Activated B cell treated with CpG ODN at 0.5 μM for 24 hours (primary cell): ENCODE measurements at regions of chr22 and their contacts with region 1.

Region 1: GRCh38 chr22:26428515-26429457 is at the start of gene ASPHD2:
- DNase-seq: peak; percentile 83
- ATAC-seq: peak; percentile 82
- H3K4me3 Mint-ChIP-seq: peak within 1 kb of the TSS; percentile 92
- H3K27ac Mint-ChIP-seq: peak within 1 kb of the TSS; percentile 98
- H3K4me1 Mint-ChIP-seq: peaks cover 59% of the 10 kb centered on the region
- H3K27me3 Mint-ChIP-seq: no peaks in the 10 kb centered on the region
- CTCF ChIP-seq: no peak
- total RNA-seq, gene ASPHD2: 15.5 TPM in 2 replicates

Region 2: DNA sequence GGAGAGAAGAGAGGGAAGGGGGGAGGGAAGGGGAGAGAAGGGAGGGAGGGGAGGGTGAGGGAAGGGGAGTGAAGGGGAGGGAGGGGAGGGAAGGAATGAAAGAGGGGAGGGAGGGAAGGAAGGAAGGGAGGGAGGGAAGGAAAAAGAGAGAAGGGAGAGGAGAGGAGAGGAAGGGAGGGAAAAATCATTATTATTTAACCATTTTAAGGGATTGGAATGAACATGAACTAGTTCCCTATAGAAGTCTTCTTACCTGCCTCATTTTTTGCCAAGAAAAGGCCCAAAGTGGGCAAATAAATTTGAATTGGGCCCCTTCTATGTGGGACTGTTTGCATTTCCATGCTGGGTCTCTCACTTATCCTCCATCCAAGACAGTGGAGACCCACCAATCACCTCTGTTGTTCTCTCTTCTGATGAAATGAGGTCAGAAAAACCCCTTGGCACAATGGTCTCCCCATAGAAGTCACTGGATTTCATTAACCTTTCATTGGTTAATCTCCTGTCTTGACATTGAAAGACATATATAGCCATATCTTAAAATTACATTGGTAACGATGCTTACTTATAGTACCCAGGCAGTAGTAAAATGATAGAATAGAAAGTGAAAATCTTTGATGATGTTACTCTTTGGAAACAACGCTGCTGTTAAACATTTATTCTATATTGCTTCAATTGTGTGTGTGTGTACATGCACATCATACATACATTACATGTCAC is 79.8 kb before region 1 on chr22:
- CTCF ChIA-PET with region 1: no interaction called
- POLR2A ChIA-PET with region 1: no interaction called
- intact Hi-C with region 1: no loop called
- DNase-seq: no peak
- ATAC-seq: no peak
- H3K4me3 Mint-ChIP-seq: no peak overlapping the region
- H3K27ac Mint-ChIP-seq: no peak overlapping the region
- H3K4me1 Mint-ChIP-seq: no peaks in the 10 kb centered on the region
- H3K27me3 Mint-ChIP-seq: peaks cover 33% of the 10 kb centered on the region
- CTCF ChIP-seq: no peak

Region 3: GRCh38 chr22:26364066-26365015 is 64.4 kb before region 1 on chr22:
- CTCF ChIA-PET with region 1: interaction called, 3 read pairs
- POLR2A ChIA-PET with region 1: no interaction called
- intact Hi-C with region 1: loop called (anchors 2 kb)
- DNase-seq: no peak
- ATAC-seq: peak; percentile 81
- H3K4me3 Mint-ChIP-seq: no peak overlapping the region
- H3K27ac Mint-ChIP-seq: no peak overlapping the region
- H3K4me1 Mint-ChIP-seq: peaks cover 7% of the 10 kb centered on the region
- H3K27me3 Mint-ChIP-seq: peaks cover 17% of the 10 kb centered on the region
- CTCF ChIP-seq: no peak

Region 4: GRCh38 chr22:26461188-26461810 is 32.5 kb after region 1 on chr22:
- CTCF ChIA-PET with region 1: interaction called, 21 read pairs
- POLR2A ChIA-PET with region 1: no interaction called
- intact Hi-C with region 1: loop called (anchors 5 kb)
- DNase-seq: peak; percentile 47
- ATAC-seq: peak; percentile 57
- H3K4me3 Mint-ChIP-seq: no peak overlapping the region
- H3K27ac Mint-ChIP-seq: no peak overlapping the region
- H3K4me1 Mint-ChIP-seq: peaks cover 2% of the 10 kb centered on the region
- H3K27me3 Mint-ChIP-seq: no peaks in the 10 kb centered on the region
- CTCF ChIP-seq: peak; percentile 66

Region 5: GRCh38 chr22:26511857-26512793 is 83.3 kb after region 1 on chr22 and contains the start of gene TFIP11:
- CTCF ChIA-PET with region 1: no interaction called
- POLR2A ChIA-PET with region 1: no interaction called
- intact Hi-C with region 1: loop called (anchors 2 kb)
- DNase-seq: peak; percentile 89
- ATAC-seq: peak; percentile 94
- H3K4me3 Mint-ChIP-seq: peak within 1 kb of the TSS; percentile 100
- H3K27ac Mint-ChIP-seq: peak within 1 kb of the TSS; percentile 96
- H3K4me1 Mint-ChIP-seq: peaks cover 39% of the 10 kb centered on the region
- H3K27me3 Mint-ChIP-seq: no peaks in the 10 kb centered on the region
- CTCF ChIP-seq: no peak
- total RNA-seq, gene TFIP11: 59.0 and 62.8 TPM in 2 replicates

Region 6: GRCh38 chr22:26658671-26659478 is 230.1 kb after region 1 on chr22:
- CTCF ChIA-PET with region 1: no interaction called
- POLR2A ChIA-PET with region 1: interaction called, 5 read pairs
- intact Hi-C with region 1: loop called (anchors 5 kb)
- DNase-seq: peak; percentile 30
- ATAC-seq: peak; percentile 77
- H3K4me3 Mint-ChIP-seq: peak overlapping the region; percentile 89
- H3K27ac Mint-ChIP-seq: peak overlapping the region; percentile 69
- H3K4me1 Mint-ChIP-seq: peaks cover 31% of the 10 kb centered on the region
- H3K27me3 Mint-ChIP-seq: peaks cover 8% of the 10 kb centered on the region
- CTCF ChIP-seq: no peak

Region 7: DNA sequence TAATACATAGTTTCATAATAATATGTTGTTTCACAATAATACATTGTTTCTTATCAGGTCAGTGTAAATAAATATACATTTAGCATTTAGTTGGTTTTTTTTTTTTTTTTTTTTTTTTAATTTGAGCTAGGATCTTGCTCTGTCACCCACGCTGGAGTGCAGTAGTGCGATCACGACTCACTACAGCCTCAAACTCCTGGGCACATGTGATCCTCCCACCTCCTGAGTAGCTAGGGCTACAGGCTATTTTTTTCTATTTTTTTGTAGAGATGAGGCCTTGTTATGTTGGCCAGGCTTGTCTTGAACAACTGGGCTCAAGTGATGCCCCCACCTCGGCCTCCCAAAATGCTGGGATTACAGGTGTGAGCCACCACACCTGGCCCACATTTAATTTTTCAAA is 272.1 kb after region 1 on chr22:
- CTCF ChIA-PET with region 1: no interaction called
- POLR2A ChIA-PET with region 1: no interaction called
- intact Hi-C with region 1: no loop called
- DNase-seq: no peak
- ATAC-seq: no peak
- H3K4me3 Mint-ChIP-seq: no peak overlapping the region
- H3K27ac Mint-ChIP-seq: no peak overlapping the region
- H3K4me1 Mint-ChIP-seq: peaks cover 20% of the 10 kb centered on the region
- H3K27me3 Mint-ChIP-seq: no peaks in the 10 kb centered on the region
- CTCF ChIP-seq: no peak

Region 8: GRCh38 chr22:27919222-27919941 is 1490.6 kb after region 1 on chr22 and contains the start of gene PITPNB:
- CTCF ChIA-PET with region 1: no interaction called
- POLR2A ChIA-PET with region 1: no interaction called
- intact Hi-C with region 1: loop called (anchors 2 kb)
- DNase-seq: peak; percentile 99
- ATAC-seq: peak; percentile 83
- H3K4me3 Mint-ChIP-seq: peak within 1 kb of the TSS; percentile 99
- H3K27ac Mint-ChIP-seq: peak within 1 kb of the TSS; percentile 99
- H3K4me1 Mint-ChIP-seq: peaks cover 56% of the 10 kb centered on the region
- H3K27me3 Mint-ChIP-seq: no peaks in the 10 kb centered on the region
- CTCF ChIP-seq: no peak
- total RNA-seq, gene PITPNB: 77.1 and 82.5 TPM in 2 replicates